ENCODE measurements at regions of chr4 and their contacts with region 1.

Region 1: DNA sequence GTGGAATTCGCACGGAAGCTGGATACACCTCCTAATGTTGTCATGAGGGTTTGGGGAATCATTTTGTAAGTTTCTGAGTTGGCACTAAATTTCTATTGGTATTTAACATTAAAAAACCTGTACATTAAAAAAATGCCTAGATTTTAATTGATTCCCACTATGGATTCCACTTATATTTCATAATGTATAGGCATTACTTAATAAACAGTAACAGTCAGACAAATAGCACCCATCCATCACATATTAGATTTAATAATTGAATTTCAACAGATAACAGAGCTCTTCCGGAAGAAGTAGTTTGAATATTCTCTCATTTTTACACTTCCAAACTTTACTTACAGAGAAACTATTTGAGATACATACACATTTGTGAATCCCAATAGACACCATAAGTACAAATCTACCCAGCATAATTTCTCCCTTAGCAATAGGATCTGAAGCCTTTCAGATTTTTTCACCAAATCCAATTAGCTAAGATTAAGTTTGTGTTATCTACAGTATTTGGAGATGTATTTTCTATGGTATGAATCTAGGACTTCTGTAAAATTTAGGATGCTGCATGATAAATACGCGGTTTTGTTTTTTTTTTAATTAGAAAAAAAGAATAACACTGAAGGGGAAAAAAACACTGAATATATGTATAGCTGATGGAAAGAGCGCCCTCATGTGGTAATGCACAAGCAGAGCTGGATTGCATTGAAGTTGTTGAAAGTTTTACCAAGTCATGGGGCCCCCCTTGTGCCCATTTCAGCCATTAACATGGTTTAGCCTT is 12.2 kb upstream of the ODAM start:
- DNase-seq: no peak
- ATAC-seq: no peak
- H3K4me3 ChIP-seq: no peak overlapping the region
- H3K27ac ChIP-seq: no peak overlapping the region
- H3K4me1 ChIP-seq: no peaks in the 10 kb centered on the region
- H3K27me3 ChIP-seq: no peaks in the 10 kb centered on the region
- CTCF ChIP-seq: peak; percentile 66

Region 2: DNA sequence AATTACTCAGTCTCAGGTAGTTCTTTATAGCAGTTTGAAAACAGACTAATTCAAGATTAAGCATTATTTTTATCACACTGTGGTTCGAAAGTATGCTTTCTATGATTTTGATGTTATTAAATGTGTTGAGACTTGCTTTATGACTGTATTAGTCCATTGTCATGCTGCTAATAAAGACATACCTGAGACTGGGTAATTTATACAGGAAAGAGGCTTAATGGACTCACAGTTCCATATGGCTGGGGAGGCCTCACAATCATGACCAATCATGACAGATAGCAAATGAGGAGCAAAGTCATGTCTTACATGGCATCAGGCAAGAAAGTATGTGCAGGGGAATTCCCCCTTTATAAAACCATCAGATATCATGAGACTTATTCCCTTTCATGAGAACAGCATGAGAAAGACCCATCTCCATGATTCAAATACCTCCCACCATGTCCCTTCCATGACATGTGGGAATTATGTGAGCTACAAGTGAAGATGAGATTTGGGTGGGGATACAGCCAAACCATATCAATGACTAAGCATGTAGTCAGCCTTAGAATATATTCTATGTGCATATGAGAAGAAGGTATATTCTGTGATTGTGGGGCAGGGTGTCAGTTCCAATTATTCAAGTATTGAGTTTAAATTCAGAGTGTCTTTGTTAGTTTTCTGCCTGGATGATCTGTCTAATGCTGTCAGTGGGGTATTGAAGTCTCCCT is 485.7 kb before region 1 on chr4:
- CTCF ChIA-PET with region 1: no interaction called
- POLR2A ChIA-PET with region 1: no interaction called
- in situ Hi-C with region 1: no loop called
- intact Hi-C with region 1: loop called (anchors 10 kb)
- DNase-seq: no peak
- ATAC-seq: no peak
- H3K4me3 ChIP-seq: no peak overlapping the region
- H3K27ac ChIP-seq: no peak overlapping the region
- H3K4me1 ChIP-seq: no peaks in the 10 kb centered on the region
- H3K27me3 ChIP-seq: no peaks in the 10 kb centered on the region
- CTCF ChIP-seq: no peak

Region 3: DNA sequence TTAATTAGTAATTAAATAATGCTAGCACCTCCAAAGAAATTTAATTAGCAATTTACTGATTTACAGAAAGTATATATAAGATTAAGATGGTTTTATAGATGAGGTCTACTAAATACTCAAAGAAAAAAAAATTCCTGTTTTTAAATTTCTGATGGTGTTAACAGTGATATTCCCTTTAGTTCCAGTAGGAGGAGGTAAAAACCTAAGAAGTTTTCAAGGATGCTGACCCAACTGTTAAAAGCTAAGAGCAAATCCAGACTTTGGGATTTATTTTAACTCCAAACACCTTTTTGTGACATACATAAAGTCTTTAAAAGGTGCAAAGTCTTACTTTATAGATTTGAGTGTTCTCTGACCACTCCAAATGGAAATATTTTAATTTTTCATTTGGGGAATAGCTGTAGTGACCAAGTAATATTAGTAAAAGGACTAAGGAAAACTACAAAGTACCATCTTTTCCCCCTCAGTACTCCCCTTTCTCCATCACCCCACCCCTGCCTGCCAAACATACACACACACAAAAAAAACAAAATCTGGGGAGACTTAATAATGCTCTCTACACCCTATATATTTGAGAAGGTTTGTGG is 286.7 kb before region 1 on chr4:
- CTCF ChIA-PET with region 1: no interaction called
- POLR2A ChIA-PET with region 1: no interaction called
- in situ Hi-C with region 1: no loop called
- intact Hi-C with region 1: loop called (anchors 5 kb)
- DNase-seq: no peak
- ATAC-seq: no peak
- H3K4me3 ChIP-seq: no peak overlapping the region
- H3K27ac ChIP-seq: no peak overlapping the region
- H3K4me1 ChIP-seq: no peaks in the 10 kb centered on the region
- H3K27me3 ChIP-seq: no peaks in the 10 kb centered on the region
- CTCF ChIP-seq: peak; percentile 31; the same call in 1 of the 2 replicates

Region 4: GRCh38 chr4:70505151-70505748 is 321.9 kb after region 1 on chr4:
- CTCF ChIA-PET with region 1: no interaction called
- POLR2A ChIA-PET with region 1: no interaction called
- in situ Hi-C with region 1: no loop called
- intact Hi-C with region 1: loop called (anchors 10 kb)
- DNase-seq: peak; percentile 39
- ATAC-seq: no peak
- H3K4me3 ChIP-seq: no peak overlapping the region
- H3K27ac ChIP-seq: no peak overlapping the region
- H3K4me1 ChIP-seq: no peaks in the 10 kb centered on the region
- H3K27me3 ChIP-seq: no peaks in the 10 kb centered on the region
- CTCF ChIP-seq: peak; percentile 91